Endothelial cell of umbilical vein (primary cell): ENCODE measurements at regions of chr12 and their contacts with region 1.

Region 1: GRCh38 chr12:119902084-119902509 is 25.0 kb upstream of the CIT start:
- DNase-seq: peak; percentile 79
- H3K4me3 ChIP-seq: no peak overlapping the region
- H3K27ac ChIP-seq: no peak overlapping the region
- H3K4me1 ChIP-seq: no peaks in the 10 kb centered on the region
- H3K27me3 ChIP-seq: peaks cover 3 to 4% of the 10 kb centered on the region in 2 experiments
- CTCF ChIP-seq: peak; percentile 72 to 84
- POLR2A ChIP-seq: no peak

Region 2: GRCh38 chr12:119804011-119804641 is 98.0 kb before region 1 on chr12:
- CTCF ChIA-PET with region 1: interaction called, 3 read pairs
- POLR2A ChIA-PET with region 1: no interaction called
- dilution Hi-C with region 1: no loop called
- intact Hi-C with region 1: loop called (anchors 1 kb)
- DNase-seq: peak; percentile 71
- H3K4me3 ChIP-seq: no peak overlapping the region
- H3K27ac ChIP-seq: no peak overlapping the region
- H3K4me1 ChIP-seq: no peaks in the 10 kb centered on the region
- H3K27me3 ChIP-seq: no peaks in the 10 kb centered on the region
- CTCF ChIP-seq: peak; percentile 47 to 65
- POLR2A ChIP-seq: no peak

Region 3: DNA sequence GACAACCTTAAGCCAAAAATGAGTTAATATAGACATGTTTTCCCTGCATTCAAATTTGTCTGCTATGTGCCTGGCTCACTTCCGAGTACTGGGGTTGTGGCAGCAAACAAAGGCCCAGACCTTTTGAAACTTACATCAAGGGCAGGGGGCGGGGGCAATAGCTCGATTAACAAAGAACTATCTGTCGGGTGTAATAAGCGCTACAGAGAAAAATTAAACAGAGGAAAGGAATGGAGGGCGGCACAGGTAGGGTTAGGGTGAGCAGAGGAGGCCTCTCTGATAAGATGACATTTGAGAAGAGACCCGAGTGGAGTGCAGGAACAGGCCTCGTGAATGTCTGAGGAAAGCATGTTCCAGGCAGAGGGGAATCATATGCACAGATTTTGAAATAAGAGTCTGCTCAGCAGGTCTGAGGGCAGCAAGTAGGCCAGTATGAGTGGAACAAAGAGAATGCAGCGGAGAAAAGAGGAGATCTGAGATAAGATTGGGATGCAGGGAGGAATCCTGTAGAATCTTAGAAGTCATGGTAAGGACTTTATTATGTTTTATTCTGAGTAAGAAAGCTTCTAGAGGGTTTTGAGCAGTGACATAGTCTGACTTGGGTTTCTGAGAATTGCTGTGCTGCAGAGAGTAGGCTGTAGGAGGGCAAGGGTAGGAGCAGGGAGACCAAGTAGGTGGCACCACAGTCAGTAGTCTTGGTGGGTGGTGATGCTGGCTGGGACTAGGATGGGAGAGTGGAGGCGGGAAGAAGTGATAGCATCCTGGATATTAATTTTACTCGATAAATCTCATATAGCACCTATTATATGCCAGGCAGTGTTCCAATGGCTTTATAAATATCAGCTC is 139.5 kb after region 1 on chr12:
- CTCF ChIA-PET with region 1: no interaction called
- POLR2A ChIA-PET with region 1: no interaction called
- dilution Hi-C with region 1: no loop called
- intact Hi-C with region 1: no loop called
- DNase-seq: no peak
- H3K4me3 ChIP-seq: no peak overlapping the region
- H3K27ac ChIP-seq: no peak overlapping the region
- H3K4me1 ChIP-seq: no peaks in the 10 kb centered on the region
- H3K27me3 ChIP-seq: peaks cover 0 to 5% of the 10 kb centered on the region in 2 experiments
- CTCF ChIP-seq: no peak
- POLR2A ChIP-seq: no peak